ENCODE measurements at regions of chr11 and their contacts with region 1.

Region 1: DNA sequence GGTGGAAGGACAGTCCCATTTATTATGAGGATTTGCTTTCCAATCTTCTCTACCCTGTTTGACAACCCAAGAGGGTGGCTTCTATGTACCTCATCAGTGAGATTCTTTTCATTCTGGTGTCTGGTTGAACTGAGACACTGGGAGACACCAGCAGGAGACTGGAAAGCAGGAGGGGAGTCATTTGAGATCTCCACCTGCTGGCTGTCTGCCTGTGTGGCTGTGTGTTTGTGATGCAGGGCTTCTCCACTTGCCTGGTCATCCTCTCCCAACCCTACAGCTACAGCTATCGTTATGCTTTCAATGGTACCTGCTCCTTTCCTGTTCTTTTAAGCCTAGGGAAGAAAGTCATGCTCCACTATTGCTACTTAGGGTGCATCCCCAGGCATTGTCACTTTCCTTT is 48.6 kb downstream of the MRGPRX1 start:
- DNase-seq: no peak
- H3K4me3 ChIP-seq: no peak overlapping the region
- CTCF ChIP-seq: no peak
- POLR2A ChIP-seq: no peak

Region 2: DNA sequence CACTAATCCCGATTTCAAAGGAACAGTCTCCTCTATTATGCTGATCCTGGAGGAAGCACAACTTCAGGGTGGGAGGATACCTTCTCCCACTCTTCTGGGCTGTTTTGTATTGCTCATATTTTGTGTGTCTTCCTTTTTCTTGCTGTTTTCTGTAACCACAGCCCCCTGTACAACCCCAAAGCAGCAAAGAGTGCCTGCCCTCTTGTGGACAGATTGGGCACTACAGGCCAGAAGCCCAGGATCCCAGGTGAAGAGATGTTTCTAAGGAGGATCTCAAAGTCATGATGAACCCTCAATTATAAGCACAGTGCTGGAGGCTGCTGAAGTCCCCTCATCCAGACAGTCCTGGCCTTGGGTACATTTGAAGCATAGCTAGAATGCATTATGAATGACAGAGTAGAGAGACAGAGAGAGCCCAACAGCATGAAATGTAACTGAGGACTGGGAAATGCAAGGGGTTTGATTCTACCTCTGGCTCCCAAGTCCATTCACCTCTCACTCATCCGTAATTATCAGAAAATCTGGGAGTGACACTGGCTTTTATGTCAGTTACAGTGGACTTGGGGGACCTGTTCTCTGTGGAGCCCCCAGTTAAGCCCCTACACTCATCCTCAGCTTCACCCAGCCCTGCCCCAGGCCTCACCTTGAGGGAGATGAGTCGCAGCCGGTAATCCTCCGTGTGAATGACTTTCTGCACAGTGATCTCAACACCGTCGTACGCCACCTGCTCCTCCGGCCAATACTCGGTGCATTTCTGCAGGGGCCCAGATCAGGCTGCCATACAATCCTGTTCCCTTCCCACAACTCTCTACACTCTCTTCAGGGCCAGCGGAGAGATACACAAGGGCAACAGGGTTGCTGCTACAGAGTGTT is 158.4 kb before region 1 on chr11:
- intact Hi-C with region 1: no loop called
- DNase-seq: peak; percentile 47 to 92
- H3K4me3 ChIP-seq: no peak overlapping the region
- CTCF ChIP-seq: peak in 1 of 3 donors; percentile 49
- POLR2A ChIP-seq: no peak

Region 3: GRCh38 chr11:18878211-18878610 is 12.4 kb before region 1 on chr11:
- intact Hi-C with region 1: loop called (anchors 1 kb)
- DNase-seq: no peak
- H3K4me3 ChIP-seq: no peak overlapping the region
- CTCF ChIP-seq: no peak
- POLR2A ChIP-seq: no peak